AG04449 (cell line): ENCODE measurements at regions of chr3 and their contacts with region 1.

Region 1: GRCh38 chr3:63818281-63819150 is 583 bp upstream of the C3orf49 start:
- DNase-seq: no peak
- H3K4me3 ChIP-seq: no peak overlapping the region
- CTCF ChIP-seq: peak; percentile 75

Region 2: GRCh38 chr3:63343674-63344073 is 474.8 kb before region 1 on chr3:
- CTCF ChIA-PET with region 1: interaction called, 491 read pairs
- POLR2A ChIA-PET with region 1: no interaction called
- DNase-seq: peak; percentile 84
- H3K4me3 ChIP-seq: no peak overlapping the region
- CTCF ChIP-seq: no peak

Region 3: GRCh38 chr3:63661248-63661647 is 157.3 kb before region 1 on chr3:
- CTCF ChIA-PET with region 1: interaction called, 54 read pairs
- POLR2A ChIA-PET with region 1: no interaction called
- DNase-seq: no peak
- H3K4me3 ChIP-seq: no peak overlapping the region
- CTCF ChIP-seq: peak; percentile 24

Region 4: DNA sequence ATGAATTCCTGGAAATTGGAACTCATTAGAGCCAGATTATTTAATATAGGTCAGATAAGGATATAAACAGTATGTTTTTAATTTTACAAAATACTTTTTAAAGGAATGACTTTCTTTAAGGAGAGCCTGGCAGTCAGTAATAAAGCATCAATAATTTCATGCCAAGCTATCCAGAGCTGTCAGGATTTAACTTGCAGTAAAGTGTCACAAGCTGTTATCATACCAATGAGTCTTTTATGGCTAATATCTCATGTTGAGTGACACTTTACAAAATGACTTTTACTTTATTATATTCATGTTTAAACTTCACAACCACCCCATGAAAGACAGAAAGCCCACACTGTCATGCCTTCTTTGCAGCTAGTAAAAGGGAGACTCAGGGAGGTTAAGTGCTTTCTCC is 72.3 kb before region 1 on chr3:
- CTCF ChIA-PET with region 1: no interaction called
- POLR2A ChIA-PET with region 1: no interaction called
- DNase-seq: no peak
- H3K4me3 ChIP-seq: no peak overlapping the region
- CTCF ChIP-seq: no peak

Region 5: DNA sequence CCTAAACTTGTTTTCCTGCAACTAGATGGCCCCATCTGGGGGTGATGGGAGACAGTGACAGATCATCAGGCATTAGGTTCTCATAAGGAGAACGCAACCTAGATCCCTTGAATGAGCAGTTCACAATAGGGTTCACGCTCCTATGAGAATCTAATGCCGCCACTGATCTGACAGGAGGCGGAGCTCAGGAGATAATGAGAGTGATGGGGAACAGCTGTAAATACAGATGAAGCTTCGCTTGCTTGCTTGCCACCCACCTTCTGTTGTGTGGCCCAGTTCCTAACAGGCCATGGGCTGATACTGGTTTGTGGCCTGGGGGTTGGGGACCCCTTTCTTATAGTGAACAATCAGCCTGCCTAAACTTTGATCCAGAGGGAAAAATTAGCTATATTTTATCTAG is 14.6 kb before region 1 on chr3:
- CTCF ChIA-PET with region 1: interaction called, 14 read pairs
- POLR2A ChIA-PET with region 1: no interaction called
- DNase-seq: no peak
- H3K4me3 ChIP-seq: no peak overlapping the region
- CTCF ChIP-seq: no peak

Region 6: DNA sequence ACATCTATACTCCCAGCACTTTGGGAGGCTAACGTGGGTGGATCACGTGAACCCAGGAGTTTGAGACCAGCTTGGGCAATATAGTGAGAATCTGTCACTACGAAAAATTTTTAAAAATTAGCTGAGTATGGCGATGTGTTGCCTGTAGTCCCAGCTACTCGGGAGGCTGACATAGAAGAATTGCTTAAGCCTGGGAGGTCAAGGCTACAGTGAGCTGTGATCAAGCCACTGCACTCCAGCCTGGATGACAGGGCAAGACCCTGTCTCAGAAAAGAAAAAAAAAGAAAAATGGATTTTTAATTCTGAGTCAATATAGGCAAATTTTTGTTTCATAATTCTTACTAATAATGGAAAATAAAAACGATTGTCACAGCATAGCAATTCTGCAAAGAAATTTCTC is 13.9 kb after region 1 on chr3:
- CTCF ChIA-PET with region 1: interaction called, 32 read pairs
- POLR2A ChIA-PET with region 1: no interaction called
- DNase-seq: no peak
- H3K4me3 ChIP-seq: no peak overlapping the region
- CTCF ChIP-seq: no peak

Region 7: DNA sequence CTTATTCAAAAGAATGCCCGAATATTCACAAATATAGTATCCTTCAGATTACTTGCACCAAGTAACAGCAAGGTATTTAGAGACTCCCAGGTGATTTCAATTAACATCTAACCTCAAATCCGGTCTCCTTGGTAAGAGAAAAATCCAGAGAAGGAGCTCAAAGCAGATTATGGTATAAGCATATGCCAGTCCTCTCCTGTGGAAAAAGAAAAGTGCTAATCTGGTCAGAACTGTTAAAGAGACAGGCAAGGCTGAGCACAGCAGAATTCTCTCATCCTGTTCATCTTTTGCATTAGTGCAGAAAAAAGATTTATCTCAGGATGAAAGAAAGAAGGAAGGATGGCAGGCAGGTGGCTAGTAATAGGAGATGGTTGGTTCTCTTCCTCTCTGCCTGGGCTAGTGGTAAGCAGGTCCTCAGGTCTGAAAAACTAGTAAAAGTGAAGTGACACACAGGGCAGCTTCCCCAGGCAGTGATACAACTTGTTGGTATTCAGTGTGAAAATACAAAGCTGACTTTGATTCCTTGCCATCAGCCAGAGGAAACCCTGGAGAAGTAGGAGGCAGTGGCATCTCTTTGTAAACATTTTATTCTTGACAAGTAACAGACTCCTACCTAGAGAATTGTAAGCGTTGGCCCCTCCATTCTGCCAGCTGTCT is 59.3 kb after region 1 on chr3:
- CTCF ChIA-PET with region 1: no interaction called
- POLR2A ChIA-PET with region 1: no interaction called
- DNase-seq: peak; percentile 26
- H3K4me3 ChIP-seq: no peak overlapping the region
- CTCF ChIP-seq: no peak

Region 8: GRCh38 chr3:63896332-63897030 is 78.0 kb after region 1 on chr3:
- CTCF ChIA-PET with region 1: no interaction called
- POLR2A ChIA-PET with region 1: no interaction called
- DNase-seq: no peak
- H3K4me3 ChIP-seq: no peak overlapping the region
- CTCF ChIP-seq: no peak

Region 9: GRCh38 chr3:63993653-63994079 is 175.2 kb after region 1 on chr3:
- CTCF ChIA-PET with region 1: interaction called, 50 read pairs
- POLR2A ChIA-PET with region 1: no interaction called
- DNase-seq: peak; percentile 23
- H3K4me3 ChIP-seq: no peak overlapping the region
- CTCF ChIP-seq: peak; percentile 92